CD4-positive, alpha-beta memory T cell (primary cell): ENCODE measurements at regions of chr5 and their contacts with region 1.

Region 1: DNA sequence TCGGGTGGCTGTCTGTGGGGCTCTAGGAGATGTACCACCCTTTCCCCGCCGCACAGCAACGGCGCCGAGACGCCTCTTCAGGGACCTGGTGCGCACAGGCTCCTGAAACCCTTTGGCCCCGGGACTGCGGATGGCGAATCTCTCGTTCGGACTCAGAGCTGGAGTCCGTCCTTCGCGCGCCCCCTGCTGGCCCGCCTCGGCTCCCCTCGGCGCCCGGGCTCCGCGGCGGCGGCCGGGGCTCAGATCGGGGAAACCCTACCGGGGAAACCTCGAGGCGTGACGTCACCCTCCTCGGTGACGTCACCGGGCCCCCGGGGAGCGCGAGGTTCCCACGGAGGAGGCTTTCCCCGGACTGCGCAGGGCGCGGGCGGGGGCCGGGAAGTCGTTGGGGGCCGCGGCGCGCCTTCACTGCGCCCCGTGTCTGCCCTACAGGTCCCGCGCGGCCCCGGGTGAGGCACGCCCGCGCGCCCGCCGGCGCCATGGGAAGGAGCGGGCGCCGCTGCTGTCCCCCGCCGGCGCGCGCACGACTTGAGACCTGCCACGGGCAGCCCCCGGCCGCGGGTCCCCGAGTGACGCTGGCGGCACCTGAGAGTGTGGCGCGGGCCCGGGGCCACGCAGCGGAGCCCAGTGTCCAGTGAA is 7.9 kb downstream of the PRR7 start:
- DNase-seq: peak; percentile 88 to 94 (median 91)
- H3K4me3 ChIP-seq: peak overlapping the region in 1 of 2 donors; percentile 77
- H3K4me3 Mint-ChIP-seq: peak overlapping the region; percentile 31 to 89 (median 82)
- H3K27ac ChIP-seq: peak overlapping the region; percentile 96
- H3K27ac Mint-ChIP-seq: peak overlapping the region; percentile 76 to 97 (median 85)
- H3K4me1 ChIP-seq: peaks cover 16% of the 10 kb centered on the region
- H3K4me1 Mint-ChIP-seq: peaks cover 9 to 36% (median 23%) of the 10 kb centered on the region in 4 donors
- H3K27me3 ChIP-seq: no peaks in the 10 kb centered on the region
- H3K27me3 Mint-ChIP-seq: peaks cover 0 to 2% of the 10 kb centered on the region in 2 donors

Region 2: GRCh38 chr5:177133091-177133852 is 321.2 kb before region 1 on chr5 and contains the start of gene NSD1:
- CTCF ChIA-PET with region 1: no interaction called
- POLR2A ChIA-PET with region 1: no interaction called
- intact Hi-C with region 1: loop called (anchors 5 kb)
- DNase-seq: peak; percentile 90 to 93 (median 92)
- H3K4me3 ChIP-seq: peak within 1 kb of the TSS; percentile 20 to 67
- H3K4me3 Mint-ChIP-seq: peak within 1 kb of the TSS; percentile 85 to 90 (median 87)
- H3K27ac ChIP-seq: peak within 1 kb of the TSS; percentile 66
- H3K27ac Mint-ChIP-seq: peak within 1 kb of the TSS; percentile 82 to 94 (median 92)
- H3K4me1 ChIP-seq: peaks cover 63% of the 10 kb centered on the region
- H3K4me1 Mint-ChIP-seq: peaks cover 36 to 73% (median 52%) of the 10 kb centered on the region in 4 donors
- H3K27me3 ChIP-seq: no peaks in the 10 kb centered on the region
- H3K27me3 Mint-ChIP-seq: no peaks in the 10 kb centered on the region
- total RNA-seq, gene NSD1: 116 to 122 TPM

Region 3: DNA sequence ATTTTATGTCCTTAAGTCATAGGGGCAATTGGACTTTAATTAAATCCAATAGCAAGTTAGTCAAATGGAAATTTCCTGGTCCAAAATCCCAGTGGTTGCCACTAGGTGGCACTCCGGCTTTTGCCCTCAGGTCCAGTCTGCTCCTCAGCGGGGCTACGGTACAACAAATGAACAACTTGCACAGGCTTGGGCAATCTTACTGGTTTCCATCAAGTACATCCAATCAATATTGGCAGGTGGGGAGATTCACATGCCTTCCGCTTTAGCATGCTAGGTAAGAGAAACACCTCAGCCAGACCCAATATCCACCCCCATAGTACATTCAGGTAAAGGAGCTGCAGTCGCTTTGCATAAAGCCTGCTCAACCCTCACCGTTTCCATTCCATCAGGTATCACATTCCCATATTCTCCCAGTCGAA is 136.5 kb before region 1 on chr5:
- CTCF ChIA-PET with region 1: interaction called, 78 read pairs
- POLR2A ChIA-PET with region 1: interaction called, 11 read pairs
- intact Hi-C with region 1: loop called (anchors 1 kb)
- DNase-seq: peak; percentile 68 to 73 (median 69)
- H3K4me3 ChIP-seq: no peak overlapping the region
- H3K4me3 Mint-ChIP-seq: no peak overlapping the region
- H3K27ac ChIP-seq: no peak overlapping the region
- H3K27ac Mint-ChIP-seq: peak overlapping the region in 2 of 7 donors; percentile 10 to 34
- H3K4me1 ChIP-seq: peaks cover 15% of the 10 kb centered on the region
- H3K4me1 Mint-ChIP-seq: peaks cover 8 to 36% (median 20%) of the 10 kb centered on the region in 4 donors
- H3K27me3 ChIP-seq: no peaks in the 10 kb centered on the region
- H3K27me3 Mint-ChIP-seq: no peaks in the 10 kb centered on the region

Region 4: GRCh38 chr5:177357459-177358351 is 96.8 kb before region 1 on chr5 and contains the start of gene RGS14:
- CTCF ChIA-PET with region 1: interaction called, 13 read pairs
- POLR2A ChIA-PET with region 1: interaction called, 18 read pairs
- intact Hi-C with region 1: no loop called
- DNase-seq: peak; percentile 85 to 91 (median 87)
- H3K4me3 ChIP-seq: peak within 1 kb of the TSS; percentile 92 to 95
- H3K4me3 Mint-ChIP-seq: peak within 1 kb of the TSS; percentile 84 to 97 (median 90)
- H3K27ac ChIP-seq: peak within 1 kb of the TSS; percentile 75
- H3K27ac Mint-ChIP-seq: peak within 1 kb of the TSS; percentile 89 to 97 (median 97)
- H3K4me1 ChIP-seq: peaks cover 71% of the 10 kb centered on the region
- H3K4me1 Mint-ChIP-seq: peaks cover 53 to 92% (median 73%) of the 10 kb centered on the region in 4 donors
- H3K27me3 ChIP-seq: no peaks in the 10 kb centered on the region
- H3K27me3 Mint-ChIP-seq: no peaks in the 10 kb centered on the region
- total RNA-seq, gene RGS14: 167 to 168 TPM

Region 5: DNA sequence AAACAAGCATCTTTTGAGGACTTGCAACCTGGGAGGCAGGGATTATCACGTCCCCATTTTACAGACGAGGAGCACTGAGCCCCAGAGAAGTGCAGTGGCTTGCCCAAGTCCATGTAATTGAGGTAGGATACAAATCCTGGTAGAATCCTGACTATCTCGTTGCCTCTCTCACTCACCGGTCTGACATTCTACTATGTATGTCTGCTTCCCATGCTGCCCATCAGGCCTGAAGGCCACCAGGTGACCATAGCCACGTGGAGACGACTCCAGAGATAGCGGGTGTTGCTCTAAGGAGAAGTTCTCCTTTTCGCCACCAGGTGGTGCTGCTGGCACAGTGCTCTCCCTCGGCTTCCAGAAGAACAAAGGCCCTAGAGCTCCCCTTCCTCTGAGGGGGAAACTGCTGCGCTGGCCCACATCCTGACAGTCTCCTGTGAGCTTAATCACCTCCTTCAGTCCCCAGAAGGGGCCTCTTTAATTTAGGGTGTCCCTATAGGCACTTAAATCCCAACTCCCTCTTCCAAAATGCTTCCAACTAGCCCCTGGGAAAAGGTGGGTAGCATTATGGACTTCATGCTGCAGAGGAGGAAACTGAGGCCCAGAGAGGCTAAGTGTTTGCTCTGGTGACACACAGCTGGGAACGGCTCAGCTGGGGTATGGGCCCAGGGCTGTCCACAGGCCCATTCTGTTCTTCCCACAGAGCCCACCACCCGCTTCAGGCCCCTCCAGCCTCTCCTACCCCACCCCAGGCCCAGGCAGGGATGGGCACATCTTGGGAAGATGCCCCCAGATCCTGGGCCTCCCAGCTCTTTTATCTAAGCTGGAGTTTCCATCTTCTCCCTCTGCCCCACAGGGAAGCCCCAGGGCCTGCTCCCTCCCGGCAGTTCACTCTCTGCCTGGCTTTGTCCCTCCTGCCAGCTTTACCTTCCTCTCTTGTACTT is 63.9 kb before region 1 on chr5:
- CTCF ChIA-PET with region 1: interaction called, 271 read pairs
- POLR2A ChIA-PET with region 1: interaction called, 117 read pairs
- intact Hi-C with region 1: loop called (anchors 1 kb)
- DNase-seq: peak; percentile 86 to 89 (median 88)
- H3K4me3 ChIP-seq: no peak overlapping the region
- H3K4me3 Mint-ChIP-seq: peak overlapping the region in 7 of 8 donors; percentile 68 to 88 (median 79)
- H3K27ac ChIP-seq: peak overlapping the region; percentile 71
- H3K27ac Mint-ChIP-seq: peak overlapping the region; percentile 79 to 98 (median 96)
- H3K4me1 ChIP-seq: peaks cover 49% of the 10 kb centered on the region
- H3K4me1 Mint-ChIP-seq: peaks cover 31 to 58% (median 38%) of the 10 kb centered on the region in 4 donors
- H3K27me3 ChIP-seq: no peaks in the 10 kb centered on the region
- H3K27me3 Mint-ChIP-seq: no peaks in the 10 kb centered on the region

Region 6: DNA sequence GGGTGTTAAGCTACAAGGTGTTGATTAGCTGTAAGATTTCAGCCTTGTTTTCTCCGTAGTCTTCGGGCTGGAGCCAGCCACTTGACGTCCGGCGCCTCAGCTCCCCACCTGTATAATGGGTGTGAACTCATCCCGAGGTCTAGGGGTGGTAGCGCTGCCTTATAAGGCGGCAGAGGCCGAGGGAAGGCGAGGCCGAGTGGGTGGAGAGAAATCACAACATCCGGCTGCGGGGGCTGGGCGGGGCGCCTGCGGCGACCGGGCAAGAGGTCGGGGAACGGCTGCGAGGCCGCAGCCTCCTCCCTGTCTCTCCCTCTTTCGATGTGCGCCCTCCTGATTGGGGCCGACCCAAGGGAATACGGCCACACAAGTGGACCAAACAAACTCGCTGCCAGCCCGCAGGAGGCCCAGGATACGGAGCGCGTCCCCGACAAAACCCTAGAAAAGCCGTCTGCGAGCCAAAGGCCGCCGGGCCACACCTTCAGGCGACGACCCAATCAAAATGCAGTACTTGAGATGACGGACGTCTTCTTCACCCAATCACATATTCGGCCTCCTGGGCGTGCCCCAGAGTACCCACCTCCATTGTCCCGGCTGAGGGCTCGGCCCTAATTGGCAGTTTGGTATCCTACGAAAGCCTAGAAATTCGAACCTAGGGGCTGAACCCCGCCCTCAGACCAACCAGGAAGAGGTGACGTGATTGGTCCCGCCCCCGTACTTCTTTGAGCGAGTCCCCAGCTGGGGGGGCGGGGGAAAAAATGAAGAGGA is 28.5 kb before region 1 on chr5:
- CTCF ChIA-PET with region 1: interaction called, 110 read pairs
- POLR2A ChIA-PET with region 1: interaction called, 1,171 read pairs
- intact Hi-C with region 1: loop called (anchors 1 kb)
- DNase-seq: peak; percentile 99 to 100 (median 100)
- H3K4me3 ChIP-seq: peak overlapping the region; percentile 21 to 53
- H3K4me3 Mint-ChIP-seq: peak overlapping the region; percentile 89 to 96 (median 92)
- H3K27ac ChIP-seq: peak overlapping the region; percentile 65
- H3K27ac Mint-ChIP-seq: peak overlapping the region; percentile 91 to 99 (median 99)
- H3K4me1 ChIP-seq: peaks cover 52% of the 10 kb centered on the region
- H3K4me1 Mint-ChIP-seq: peaks cover 31 to 65% (median 44%) of the 10 kb centered on the region in 4 donors
- H3K27me3 ChIP-seq: no peaks in the 10 kb centered on the region
- H3K27me3 Mint-ChIP-seq: no peaks in the 10 kb centered on the region

Region 7: DNA sequence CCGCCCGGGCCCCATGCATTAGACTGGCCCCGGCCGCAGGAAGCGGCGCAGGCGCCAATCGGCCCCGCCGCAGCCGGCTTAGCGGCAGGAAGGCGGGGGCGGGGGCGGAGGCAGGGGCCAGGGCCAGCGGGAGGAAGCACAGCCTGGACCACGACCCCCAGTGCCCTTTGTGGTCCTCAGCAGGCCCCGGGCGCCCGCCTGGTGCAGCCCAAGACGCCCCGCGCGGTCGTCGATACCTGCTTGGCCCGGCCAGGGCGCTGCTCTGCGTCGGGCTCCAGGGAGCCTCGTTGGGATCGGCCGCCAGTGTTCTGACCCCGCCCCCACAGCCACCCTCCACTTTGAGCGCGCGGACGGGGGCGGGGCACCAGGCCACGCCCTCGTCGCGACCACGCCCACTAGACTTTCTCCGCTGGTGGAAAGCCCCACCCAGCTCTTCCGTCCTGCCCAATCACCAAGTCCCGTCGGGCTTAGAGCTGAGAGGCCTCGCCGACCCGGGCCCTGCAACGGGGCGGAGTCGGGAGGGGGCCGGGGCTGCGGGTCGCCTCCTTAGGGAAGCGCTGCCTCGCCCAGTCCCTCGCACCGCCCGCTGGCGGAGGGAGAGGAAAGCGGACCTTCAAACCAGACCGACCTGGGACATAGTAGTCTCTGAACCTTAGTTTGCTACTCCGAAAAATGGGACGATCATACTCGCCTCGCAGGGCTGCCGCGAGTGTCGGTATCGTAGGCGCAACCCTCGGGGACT is 42.9 kb after region 1 on chr5 and contains the start of gene PDLIM7:
- CTCF ChIA-PET with region 1: interaction called, 20 read pairs
- POLR2A ChIA-PET with region 1: interaction called, 9 read pairs
- intact Hi-C with region 1: loop called (anchors 1 kb)
- DNase-seq: peak; percentile 91 to 94 (median 92)
- H3K4me3 ChIP-seq: peak within 1 kb of the TSS; percentile 65 to 75
- H3K4me3 Mint-ChIP-seq: peak within 1 kb of the TSS; percentile 84 to 93 (median 88)
- H3K27ac ChIP-seq: peak within 1 kb of the TSS; percentile 49
- H3K27ac Mint-ChIP-seq: peak within 1 kb of the TSS; percentile 57 to 92 (median 85)
- H3K4me1 ChIP-seq: peaks cover 11% of the 10 kb centered on the region
- H3K4me1 Mint-ChIP-seq: peaks cover 8 to 26% (median 20%) of the 10 kb centered on the region in 4 donors
- H3K27me3 ChIP-seq: no peaks in the 10 kb centered on the region
- H3K27me3 Mint-ChIP-seq: no peaks in the 10 kb centered on the region
- total RNA-seq, gene PDLIM7: 5.8 to 7.3 TPM